Esophagus muscularis mucosa (tissue), 4 donors: ENCODE measurements at regions of chr1 and their contacts with region 1.

Region 1: DNA sequence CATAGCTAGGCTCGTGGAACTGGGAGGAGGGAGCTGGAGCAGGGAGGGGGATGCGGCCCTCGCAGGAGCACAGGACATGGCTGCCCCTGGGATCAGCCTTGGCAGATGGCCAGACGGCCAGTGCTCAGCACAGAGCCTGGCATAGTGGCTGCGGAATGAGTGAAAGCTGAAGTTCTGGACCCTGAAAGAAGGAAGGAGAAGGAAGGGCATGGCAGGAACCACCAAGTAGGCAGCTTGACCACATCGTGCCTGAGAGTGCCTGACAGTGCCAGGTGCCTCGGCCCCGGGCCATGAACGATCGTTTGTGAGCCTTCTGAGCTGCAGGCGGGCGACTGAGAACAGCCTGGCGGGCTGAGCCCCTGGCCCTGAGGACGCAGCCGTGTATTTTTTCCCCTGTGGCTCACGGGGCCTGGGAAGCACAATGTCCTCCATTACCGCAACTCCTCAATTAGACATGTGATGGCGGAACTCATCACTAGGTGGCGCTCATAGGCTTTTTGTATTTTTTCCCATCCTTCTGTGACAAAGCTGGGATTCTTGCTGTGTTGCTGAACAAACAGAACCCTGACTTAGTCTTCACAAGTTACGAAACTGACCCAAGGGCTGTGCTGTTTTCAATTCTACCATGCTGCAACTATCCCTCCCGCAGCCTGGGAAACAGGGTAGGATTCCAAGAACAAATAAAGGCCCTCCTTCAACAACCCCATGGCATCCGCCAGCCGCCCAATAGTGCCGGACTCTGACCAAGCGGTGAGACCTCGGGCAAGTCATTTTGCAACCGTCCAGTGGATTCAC is 29.9 kb upstream of the TMEM61 start:
- DNase-seq: peak; percentile 94
- H3K4me3 ChIP-seq: peak overlapping the region; percentile 18 to 35 (median 27)
- H3K27ac ChIP-seq: peak overlapping the region in 2 of 4 donors; percentile 50 to 51
- H3K4me1 ChIP-seq: peaks cover 11 to 12% (median 12%) of the 10 kb centered on the region in 4 donors
- H3K27me3 ChIP-seq: peaks cover 0 to 2% (median 0%) of the 10 kb centered on the region in 4 donors
- CTCF ChIP-seq: peak; percentile 79 to 83 (median 82)
- EP300 ChIP-seq: no peak
- POLR2A ChIP-seq: no peak

Region 2: GRCh38 chr1:54927472-54928240 is 22.9 kb before region 1 on chr1:
- intact Hi-C with region 1: no loop called
- DNase-seq: no peak
- H3K4me3 ChIP-seq: no peak overlapping the region
- H3K27ac ChIP-seq: no peak overlapping the region
- H3K4me1 ChIP-seq: peaks cover 9 to 16% (median 14%) of the 10 kb centered on the region in 4 donors
- H3K27me3 ChIP-seq: no peaks in the 10 kb centered on the region
- CTCF ChIP-seq: no peak
- EP300 ChIP-seq: no peak
- POLR2A ChIP-seq: no peak

Region 3: GRCh38 chr1:54996359-54996868 is 45.8 kb after region 1 on chr1:
- intact Hi-C with region 1: loop called (anchors 2 kb)
- DNase-seq: no peak
- H3K4me3 ChIP-seq: no peak overlapping the region
- H3K27ac ChIP-seq: no peak overlapping the region
- H3K4me1 ChIP-seq: peaks cover 9 to 11% (median 11%) of the 10 kb centered on the region in 4 donors
- H3K27me3 ChIP-seq: peaks cover 0 to 64% (median 18%) of the 10 kb centered on the region in 4 donors
- CTCF ChIP-seq: peak; percentile 70 to 84 (median 82)
- EP300 ChIP-seq: no peak
- POLR2A ChIP-seq: no peak

Region 4: DNA sequence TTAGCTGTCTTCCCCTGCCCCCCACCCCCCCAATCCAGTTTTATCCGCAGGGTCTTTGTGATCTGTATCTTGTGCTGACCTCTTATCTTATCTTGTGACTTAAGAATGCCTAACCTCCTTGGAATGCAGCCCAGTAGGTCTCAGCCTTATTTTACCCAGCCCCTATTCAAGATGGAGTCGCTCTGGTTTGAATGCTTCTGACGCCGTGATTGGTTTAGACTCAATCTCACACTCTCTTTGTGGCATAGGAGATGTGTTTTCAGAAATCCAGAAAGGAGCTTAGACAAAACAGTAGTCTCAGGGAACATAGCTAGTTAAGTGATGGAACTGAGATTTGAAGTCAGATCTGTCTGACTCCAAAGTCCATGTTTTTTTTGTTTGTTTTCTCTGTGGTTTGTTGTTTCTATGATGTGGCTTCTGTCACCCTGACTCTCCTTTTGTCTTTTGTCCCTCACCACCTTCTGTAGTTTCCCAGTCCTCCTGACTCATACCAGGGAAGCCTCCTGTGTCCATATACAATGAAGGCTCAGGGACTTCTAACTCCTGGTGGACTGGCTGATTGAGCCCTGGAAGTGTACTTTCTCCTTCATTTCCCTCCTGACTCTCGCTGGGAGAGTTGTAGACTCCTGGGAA is 282.7 kb after region 1 on chr1:
- intact Hi-C with region 1: no loop called
- DNase-seq: no peak
- H3K4me3 ChIP-seq: no peak overlapping the region
- H3K27ac ChIP-seq: no peak overlapping the region
- H3K4me1 ChIP-seq: peaks cover 0 to 23% (median 15%) of the 10 kb centered on the region in 4 donors
- H3K27me3 ChIP-seq: no peaks in the 10 kb centered on the region
- CTCF ChIP-seq: no peak
- EP300 ChIP-seq: no peak
- POLR2A ChIP-seq: no peak